Endothelial cell of umbilical vein (primary cell): ENCODE measurements at regions of chr2 and their contacts with region 1.

Region 1: DNA sequence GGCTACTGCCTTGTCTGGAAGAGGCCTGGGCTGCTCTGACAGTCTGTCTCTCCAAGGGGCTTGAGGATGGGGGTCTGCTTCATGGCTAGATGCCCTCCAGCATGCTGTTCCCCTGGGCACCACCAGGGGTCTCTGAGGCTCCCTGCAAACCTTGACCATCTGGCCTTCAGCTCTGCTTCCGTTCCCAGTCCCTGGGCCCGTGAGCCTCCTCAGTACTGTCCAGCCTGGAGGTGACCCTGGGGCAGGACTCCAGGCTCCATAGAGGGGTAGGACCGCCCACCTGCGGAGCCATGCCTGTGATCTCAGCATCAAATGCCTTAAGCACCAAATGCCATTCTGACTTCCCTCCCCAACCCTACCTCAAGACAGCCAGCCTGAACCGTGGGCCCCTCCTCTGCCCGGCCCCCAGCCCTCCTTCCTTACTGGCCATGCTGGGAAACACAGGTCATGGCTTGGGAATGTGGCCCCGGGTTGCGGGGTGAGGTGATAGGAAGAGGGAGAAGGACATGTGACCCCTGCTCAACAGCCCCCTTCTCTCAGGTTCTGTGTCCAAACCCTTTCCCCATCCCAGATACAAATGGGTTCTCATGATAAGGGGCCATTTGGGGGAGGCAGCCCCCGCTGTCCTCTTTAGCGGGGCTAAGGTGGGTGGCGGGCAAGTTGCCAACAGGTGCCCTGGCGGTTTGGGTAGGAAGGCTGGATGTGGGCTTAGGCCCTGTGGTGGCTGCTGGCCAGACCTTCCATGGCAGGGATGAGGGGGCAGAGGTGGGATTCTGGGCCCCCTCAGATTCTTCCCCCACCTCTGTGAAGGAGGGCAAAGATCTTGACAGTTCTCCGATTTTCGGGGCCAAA is 25.0 kb downstream of the SPEG start:
- DNase-seq: peak; percentile 38
- H3K4me3 ChIP-seq: no peak overlapping the region
- H3K27ac ChIP-seq: no peak overlapping the region
- H3K4me1 ChIP-seq: no peaks in the 10 kb centered on the region
- H3K27me3 ChIP-seq: no peaks in the 10 kb centered on the region
- CTCF ChIP-seq: peak; percentile 79 to 95
- POLR2A ChIP-seq: no peak

Region 2: DNA sequence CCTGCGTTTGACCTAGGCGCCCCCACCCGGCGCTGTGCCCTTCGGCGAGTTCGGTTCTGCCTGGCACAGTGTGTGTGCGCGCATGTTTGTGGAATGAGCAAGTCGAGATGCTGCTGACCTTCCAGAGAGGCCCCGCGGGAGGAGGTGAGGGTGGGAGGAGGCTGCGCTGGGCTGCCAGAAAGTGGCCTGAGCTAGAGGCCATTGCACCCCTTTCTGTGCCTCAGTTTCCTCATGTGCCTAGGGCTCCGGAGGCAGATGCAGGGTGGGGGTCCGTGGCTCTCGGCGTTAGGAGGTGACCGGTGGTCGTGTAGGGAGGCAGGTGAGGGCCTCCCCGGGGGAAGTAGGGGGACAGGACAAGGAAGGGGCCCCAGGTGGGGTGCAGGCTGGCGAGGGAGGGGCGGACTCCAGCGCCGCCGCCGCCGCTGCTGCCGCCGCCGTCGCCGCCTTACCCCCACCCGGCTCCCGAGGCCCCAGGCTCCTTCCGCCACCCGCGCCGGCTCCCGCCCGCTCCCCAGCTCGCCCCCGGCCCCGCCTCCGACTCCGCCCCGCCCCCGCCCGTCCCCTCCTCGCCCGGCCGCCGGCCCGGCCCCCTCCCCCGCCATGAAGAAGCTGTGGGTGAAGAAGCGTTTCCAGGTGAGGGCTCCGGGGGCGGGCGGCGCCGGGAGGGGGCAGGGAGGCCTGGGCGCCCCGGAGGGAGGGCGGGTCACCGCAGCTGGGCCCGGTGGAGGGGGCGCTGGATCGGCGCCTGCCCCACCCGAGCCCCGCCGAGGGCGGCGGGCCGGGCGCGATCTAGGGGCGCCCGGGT is 18.0 kb before region 1 on chr2:
- CTCF ChIA-PET with region 1: interaction called, 24 read pairs
- POLR2A ChIA-PET with region 1: no interaction called
- dilution Hi-C with region 1: no loop called
- intact Hi-C with region 1: no loop called
- DNase-seq: no peak
- H3K4me3 ChIP-seq: peak overlapping the region in 1 of 3 experiments; percentile 41
- H3K27ac ChIP-seq: no peak overlapping the region
- H3K4me1 ChIP-seq: peaks cover 4% of the 10 kb centered on the region
- H3K27me3 ChIP-seq: peaks cover 18 to 31% of the 10 kb centered on the region in 2 experiments
- CTCF ChIP-seq: no peak
- POLR2A ChIP-seq: no peak

Region 3: GRCh38 chr2:219475697-219476651 is 16.3 kb after region 1 on chr2:
- CTCF ChIA-PET with region 1: interaction called, 14 read pairs
- POLR2A ChIA-PET with region 1: no interaction called
- dilution Hi-C with region 1: no loop called
- intact Hi-C with region 1: loop called (anchors 1 kb)
- DNase-seq: peak; percentile 45
- H3K4me3 ChIP-seq: no peak overlapping the region
- H3K27ac ChIP-seq: no peak overlapping the region
- H3K4me1 ChIP-seq: no peaks in the 10 kb centered on the region
- H3K27me3 ChIP-seq: peaks cover 0 to 2% of the 10 kb centered on the region in 2 experiments
- CTCF ChIP-seq: peak; percentile 80 to 91
- POLR2A ChIP-seq: no peak

Region 4: DNA sequence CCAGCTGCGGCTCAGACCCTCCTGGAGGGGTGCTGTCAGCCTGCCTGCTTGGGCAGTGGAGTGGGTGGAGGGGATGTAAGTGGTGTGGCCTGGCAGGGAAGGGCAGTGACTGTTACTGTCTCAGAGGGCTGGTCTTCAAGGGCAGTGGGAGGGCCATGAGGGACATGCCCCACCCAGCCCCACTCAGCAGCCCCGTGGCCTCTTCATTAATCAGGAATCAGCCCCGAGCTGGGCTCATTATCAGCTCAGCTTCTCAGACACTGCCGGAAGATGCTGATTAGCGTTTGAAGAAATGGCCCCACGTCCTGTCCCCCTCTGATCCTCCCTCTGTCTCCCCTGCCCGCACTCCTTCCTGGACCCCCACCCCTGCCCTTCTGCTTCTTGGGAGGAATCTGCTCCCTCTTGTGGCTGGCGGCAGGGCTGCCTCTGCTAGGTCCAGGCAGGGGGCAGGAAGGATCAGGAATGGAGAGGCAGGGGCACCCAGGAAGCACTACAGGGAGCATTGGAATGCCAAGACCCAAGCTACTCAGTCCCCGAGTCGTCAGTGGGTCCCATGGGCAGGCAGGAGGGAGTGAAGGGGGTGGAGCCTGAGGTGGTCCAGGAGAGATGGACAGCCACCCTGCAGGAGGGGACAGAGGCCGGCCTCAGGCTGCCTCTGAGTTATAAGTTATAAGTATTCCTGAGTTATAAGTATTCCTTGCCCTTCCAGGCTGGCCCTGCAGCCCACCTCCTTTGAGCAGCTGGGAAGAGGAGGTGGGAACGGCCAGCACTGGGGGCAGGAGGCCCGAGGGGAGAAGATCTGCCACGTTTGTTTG is 61.6 kb after region 1 on chr2:
- CTCF ChIA-PET with region 1: interaction called, 10 read pairs
- POLR2A ChIA-PET with region 1: no interaction called
- dilution Hi-C with region 1: no loop called
- intact Hi-C with region 1: no loop called
- DNase-seq: no peak
- H3K4me3 ChIP-seq: no peak overlapping the region
- H3K27ac ChIP-seq: no peak overlapping the region
- H3K4me1 ChIP-seq: no peaks in the 10 kb centered on the region
- H3K27me3 ChIP-seq: peaks cover 53 to 66% of the 10 kb centered on the region in 2 experiments
- CTCF ChIP-seq: peak; percentile 26 to 63
- POLR2A ChIP-seq: no peak

Region 5: GRCh38 chr2:219571311-219572236 is 111.9 kb after region 1 on chr2 and contains the start of gene OBSL1:
- CTCF ChIA-PET with region 1: no interaction called
- POLR2A ChIA-PET with region 1: no interaction called
- dilution Hi-C with region 1: no loop called
- intact Hi-C with region 1: no loop called
- DNase-seq: peak; percentile 61
- H3K4me3 ChIP-seq: peak within 1 kb of the TSS in 2 of 3 experiments; percentile 36 to 75
- H3K27ac ChIP-seq: no peak within 1 kb of the TSS
- H3K4me1 ChIP-seq: no peaks in the 10 kb centered on the region
- H3K27me3 ChIP-seq: peaks cover 14 to 25% of the 10 kb centered on the region in 2 experiments
- CTCF ChIP-seq: no peak
- POLR2A ChIP-seq: no peak
- total RNA-seq, gene OBSL1: 8.0 and 16.7 TPM in 2 replicates

Region 6: DNA sequence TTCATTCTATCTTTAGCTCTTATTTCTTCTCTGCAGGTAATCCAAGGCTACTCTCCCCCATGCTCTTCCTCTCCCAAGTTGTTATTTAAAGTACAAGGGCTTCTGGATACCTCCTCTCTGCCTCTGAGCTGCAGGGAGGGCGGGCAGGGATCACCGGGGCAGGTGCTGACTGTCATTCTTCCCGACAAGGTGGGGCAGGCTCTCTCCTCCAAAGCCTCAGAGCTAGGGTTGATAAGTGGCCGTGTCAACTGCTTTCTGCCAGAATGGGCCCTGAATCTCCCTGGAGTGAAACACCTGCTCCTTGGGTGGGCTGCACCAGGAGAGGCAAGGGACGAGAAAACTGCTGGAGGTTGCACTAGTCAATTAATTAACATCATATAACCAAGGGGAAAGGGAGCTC is 418.0 kb after region 1 on chr2:
- CTCF ChIA-PET with region 1: no interaction called
- POLR2A ChIA-PET with region 1: no interaction called
- dilution Hi-C with region 1: no loop called
- intact Hi-C with region 1: no loop called
- DNase-seq: no peak
- H3K4me3 ChIP-seq: no peak overlapping the region
- H3K27ac ChIP-seq: no peak overlapping the region
- H3K4me1 ChIP-seq: no peaks in the 10 kb centered on the region
- H3K27me3 ChIP-seq: no peaks in the 10 kb centered on the region
- CTCF ChIP-seq: no peak
- POLR2A ChIP-seq: no peak